Cardiac septum (tissue), 1 donor: ENCODE measurements at regions of chr17 and their contacts with region 1.

Region 1: DNA sequence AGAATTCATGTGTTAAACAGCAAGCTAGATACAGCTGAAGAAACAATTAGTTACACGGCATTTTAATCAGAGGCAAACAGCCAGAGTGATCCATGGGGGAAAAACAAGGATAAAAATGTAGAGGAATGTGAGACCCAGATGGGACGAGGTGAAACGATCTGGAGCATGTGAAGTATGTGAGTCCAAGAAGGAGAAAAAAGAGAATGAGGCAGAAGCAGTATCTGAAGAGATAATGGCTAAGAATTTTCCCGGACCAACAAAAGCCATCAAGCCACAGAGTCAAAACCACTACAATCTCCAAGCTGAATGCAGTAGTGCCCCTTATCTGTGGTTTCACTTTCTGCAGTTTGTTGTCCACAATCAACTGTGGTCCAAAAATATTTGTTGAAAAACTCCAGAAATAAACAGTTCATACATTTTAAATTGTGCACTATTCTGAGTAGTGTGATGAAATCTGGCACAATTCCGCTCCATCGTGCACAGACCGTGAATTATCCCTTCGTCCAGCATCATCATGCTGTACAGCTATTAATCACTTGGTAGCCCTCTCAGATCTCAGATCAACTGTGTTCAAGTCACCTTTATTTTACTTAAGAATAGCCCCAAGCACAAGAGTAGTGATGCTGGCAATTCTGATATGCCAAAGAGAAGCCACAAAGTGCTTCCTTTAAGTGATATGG is 18.8 kb downstream of the MYH10 start:
- DNase-seq: no peak

Region 2: GRCh38 chr17:8673612-8674011 is 61.9 kb after region 1 on chr17:
- intact Hi-C with region 1: loop called (anchors 5 kb)
- DNase-seq: no peak

Region 3: DNA sequence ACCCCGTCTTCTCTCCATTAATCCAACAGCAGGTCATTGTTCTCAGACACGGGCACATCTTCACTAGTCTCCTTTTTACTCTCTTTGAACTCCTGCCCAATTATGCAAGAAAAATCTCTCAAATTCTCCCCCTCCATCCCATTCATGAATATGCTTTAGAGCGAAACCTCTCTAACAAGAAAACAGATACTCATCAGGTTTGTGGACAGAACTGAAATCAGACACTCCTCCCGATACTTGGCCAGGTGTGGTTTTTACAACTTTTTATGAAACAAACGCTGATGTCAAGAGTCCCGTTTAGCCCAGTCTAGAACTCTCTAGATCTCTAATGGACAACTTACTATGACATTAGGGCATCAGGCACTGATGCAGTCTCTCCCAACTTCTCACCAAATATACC is 312.8 kb after region 1 on chr17:
- intact Hi-C with region 1: no loop called
- DNase-seq: no peak